Activated CD4-positive, alpha-beta memory T cell treated with anti-CD3 and anti-CD28 coated beads for 36 hours (primary cell): ENCODE measurements at regions of chr1 and their contacts with region 1.

Region 1: DNA sequence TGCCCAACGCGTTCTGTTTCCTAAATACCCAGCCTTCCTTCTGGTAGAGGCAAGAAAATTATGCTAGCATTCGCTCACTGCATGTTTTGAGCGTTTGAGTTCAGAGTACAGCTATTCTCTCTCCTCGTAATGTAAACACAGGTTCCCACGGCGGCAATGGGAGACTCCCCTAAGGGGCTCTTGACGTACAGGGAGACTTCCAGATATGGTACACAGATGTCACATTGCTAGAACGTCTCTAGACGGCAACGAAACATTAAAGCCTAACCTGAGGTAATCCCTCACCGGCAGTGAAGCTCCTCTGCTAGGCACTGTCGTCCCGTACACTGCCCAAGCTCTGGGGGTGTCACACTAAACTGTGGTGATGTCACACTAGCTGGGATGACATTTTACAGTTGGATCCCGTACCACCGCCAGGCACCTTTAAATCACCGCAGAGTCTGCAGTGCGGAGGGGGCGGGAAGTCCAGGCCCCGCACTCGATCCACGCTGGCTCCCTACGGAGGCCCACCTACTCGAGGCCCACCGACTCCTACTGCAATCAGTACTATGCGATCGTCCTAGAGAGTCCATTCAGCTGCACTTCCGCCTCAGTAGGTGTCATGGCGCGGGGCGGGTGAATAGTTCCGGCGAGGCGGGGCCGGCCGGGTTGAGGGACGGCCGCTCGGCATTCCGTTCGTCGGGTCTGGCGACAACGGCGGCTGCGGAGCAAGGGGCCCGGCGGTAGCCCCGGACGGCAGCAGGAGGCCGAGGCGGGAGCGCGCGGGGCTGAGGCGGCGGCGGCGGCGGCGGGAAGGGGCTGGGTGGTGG is at the start of gene HIPK1:
- DNase-seq: peak; percentile 95
- H3K4me3 Mint-ChIP-seq: peak within 1 kb of the TSS; percentile 98
- H3K27ac Mint-ChIP-seq: peak within 1 kb of the TSS; percentile 99
- H3K4me1 Mint-ChIP-seq: peaks cover 46% of the 10 kb centered on the region
- H3K27me3 Mint-ChIP-seq: no peaks in the 10 kb centered on the region
- total RNA-seq, gene HIPK1: 55.3 to 55.7 TPM

Region 2: GRCh38 chr1:113389953-113390834 is 539.0 kb before region 1 on chr1 and contains the start of gene MAGI3:
- CTCF ChIA-PET with region 1: no interaction called
- POLR2A ChIA-PET with region 1: no interaction called
- intact Hi-C with region 1: loop called (anchors 10 kb)
- DNase-seq: peak; percentile 97
- H3K4me3 Mint-ChIP-seq: peak within 1 kb of the TSS; percentile 92
- H3K27ac Mint-ChIP-seq: peak within 1 kb of the TSS; percentile 77
- H3K4me1 Mint-ChIP-seq: peaks cover 24% of the 10 kb centered on the region
- H3K27me3 Mint-ChIP-seq: no peaks in the 10 kb centered on the region
- total RNA-seq, gene MAGI3: 7.3 to 7.4 TPM

Region 3: GRCh38 chr1:113835642-113836307 is 93.4 kb before region 1 on chr1:
- CTCF ChIA-PET with region 1: interaction called, 27 read pairs
- POLR2A ChIA-PET with region 1: no interaction called
- intact Hi-C with region 1: loop called (anchors 1 kb)
- DNase-seq: no peak
- H3K4me3 Mint-ChIP-seq: no peak overlapping the region
- H3K27ac Mint-ChIP-seq: no peak overlapping the region
- H3K4me1 Mint-ChIP-seq: peaks cover 5% of the 10 kb centered on the region
- H3K27me3 Mint-ChIP-seq: no peaks in the 10 kb centered on the region

Region 4: GRCh38 chr1:113904674-113905434 is 24.3 kb before region 1 on chr1 and contains the starts of genes AP4B1 and DCLRE1B:
- CTCF ChIA-PET with region 1: interaction called, 54 read pairs
- POLR2A ChIA-PET with region 1: interaction called, 137 read pairs
- intact Hi-C with region 1: loop called (anchors 1 kb)
- DNase-seq: peak; percentile 99
- H3K4me3 Mint-ChIP-seq: peak within 1 kb of the TSS; percentile 94
- H3K27ac Mint-ChIP-seq: peak within 1 kb of the TSS; percentile 96
- H3K4me1 Mint-ChIP-seq: peaks cover 39% of the 10 kb centered on the region
- H3K27me3 Mint-ChIP-seq: no peaks in the 10 kb centered on the region
- total RNA-seq, gene AP4B1: 41.4 to 42.2 TPM
- total RNA-seq, gene DCLRE1B: 19.4 to 19.6 TPM

Region 5: DNA sequence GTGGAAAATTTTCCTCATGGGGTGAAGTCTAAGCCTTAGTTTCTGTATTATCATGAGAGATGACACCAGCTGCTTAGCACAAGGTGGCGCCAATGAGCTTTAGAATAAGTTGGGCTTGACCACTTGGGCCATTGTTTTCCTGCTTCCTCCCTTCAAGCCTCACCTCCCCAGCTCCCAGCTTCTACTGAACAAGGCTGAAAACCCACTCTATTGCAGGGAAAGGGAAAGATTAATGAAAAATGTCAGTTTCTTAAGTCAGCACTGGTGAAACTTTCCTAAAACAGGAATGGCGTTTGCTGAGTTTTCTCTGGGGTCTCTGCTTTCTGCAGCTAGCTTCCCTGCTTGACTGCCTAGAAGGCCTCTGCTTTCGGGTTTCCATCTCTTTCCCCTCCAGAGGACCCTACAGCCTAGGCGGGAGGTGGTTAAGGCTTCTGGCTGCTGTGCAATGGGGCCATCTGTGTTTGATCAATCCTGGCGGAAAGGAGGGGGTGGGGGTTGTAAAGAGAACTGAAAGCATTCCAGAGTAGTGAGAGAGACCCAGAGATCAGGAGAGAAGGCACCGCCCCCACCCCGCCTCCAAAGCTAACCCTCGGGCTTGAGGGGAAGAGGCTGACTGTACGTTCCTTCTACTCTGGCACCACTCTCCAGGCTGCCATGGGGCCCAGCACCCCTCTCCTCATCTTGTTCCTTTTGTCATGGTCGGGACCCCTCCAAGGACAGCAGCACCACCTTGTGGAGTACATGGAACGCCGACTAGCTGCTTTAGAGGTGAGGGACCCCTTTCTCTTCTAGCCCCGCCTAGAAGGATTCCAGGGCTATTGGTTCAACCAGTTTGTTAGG is 49.9 kb after region 1 on chr1 and contains the start of gene OLFML3:
- CTCF ChIA-PET with region 1: interaction called, 3 read pairs
- POLR2A ChIA-PET with region 1: interaction called, 3 read pairs
- intact Hi-C with region 1: loop called (anchors 5 kb)
- DNase-seq: peak; percentile 67
- H3K4me3 Mint-ChIP-seq: no peak within 1 kb of the TSS
- H3K27ac Mint-ChIP-seq: no peak within 1 kb of the TSS
- H3K4me1 Mint-ChIP-seq: peaks cover 33% of the 10 kb centered on the region
- H3K27me3 Mint-ChIP-seq: no peaks in the 10 kb centered on the region
- total RNA-seq, gene OLFML3: 0.21 TPM in 1 of 2 experiments, not detected in the other